Activated CD8-positive, alpha-beta T cell treated with anti-CD3 and anti-CD28 coated beads, Interleukin-2, amount 10 ng/mL, durations not matched to agents 7 days and 5 days (primary cell): ENCODE measurements at regions of chr7 and their contacts with region 1.

Region 1: DNA sequence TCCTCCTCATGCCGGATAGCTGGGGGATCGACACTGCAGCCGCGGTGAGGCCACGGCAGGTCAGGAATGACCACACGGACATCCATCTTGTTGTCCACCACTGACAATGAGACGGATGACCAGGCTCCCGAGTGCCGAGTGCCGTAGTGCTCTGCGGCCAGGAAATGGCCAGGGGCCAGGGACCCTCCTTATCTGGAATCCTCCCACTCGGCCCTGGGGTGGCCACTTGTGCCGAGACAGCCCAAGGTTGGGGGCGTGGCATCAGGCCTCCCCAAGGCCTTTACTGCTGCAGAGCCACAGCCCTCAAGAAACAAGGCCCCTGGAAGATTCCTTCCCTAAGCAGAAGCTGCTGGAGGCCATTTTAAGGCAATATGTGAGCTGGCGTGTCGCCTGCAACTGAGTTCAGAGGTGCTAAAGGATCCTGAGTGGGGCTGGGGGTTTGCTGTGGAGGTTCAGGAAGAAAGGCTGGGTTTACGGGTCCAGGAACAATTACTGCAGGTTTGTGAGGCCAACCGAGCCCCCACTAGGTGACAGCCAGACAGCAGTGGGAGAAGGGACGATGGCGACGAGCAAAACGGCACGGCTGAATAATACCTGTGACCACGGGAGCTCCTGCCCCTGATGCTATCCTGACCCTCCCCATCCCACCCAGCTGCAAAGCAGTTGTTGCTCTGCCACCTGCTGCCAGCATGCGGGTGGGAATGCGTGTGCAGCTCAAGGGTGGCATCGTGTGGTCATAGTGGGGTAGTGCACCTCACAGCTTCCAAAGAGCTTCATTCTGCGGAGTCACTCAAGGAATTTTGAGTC is 31.6 kb upstream of the LEP start:
- DNase-seq: peak; percentile 74
- ATAC-seq: peak; percentile 84
- H3K4me3 Mint-ChIP-seq: no peak overlapping the region
- H3K27ac Mint-ChIP-seq: no peak overlapping the region
- H3K4me1 Mint-ChIP-seq: no peaks in the 10 kb centered on the region
- H3K27me3 Mint-ChIP-seq: peaks cover 14% of the 10 kb centered on the region

Region 2: DNA sequence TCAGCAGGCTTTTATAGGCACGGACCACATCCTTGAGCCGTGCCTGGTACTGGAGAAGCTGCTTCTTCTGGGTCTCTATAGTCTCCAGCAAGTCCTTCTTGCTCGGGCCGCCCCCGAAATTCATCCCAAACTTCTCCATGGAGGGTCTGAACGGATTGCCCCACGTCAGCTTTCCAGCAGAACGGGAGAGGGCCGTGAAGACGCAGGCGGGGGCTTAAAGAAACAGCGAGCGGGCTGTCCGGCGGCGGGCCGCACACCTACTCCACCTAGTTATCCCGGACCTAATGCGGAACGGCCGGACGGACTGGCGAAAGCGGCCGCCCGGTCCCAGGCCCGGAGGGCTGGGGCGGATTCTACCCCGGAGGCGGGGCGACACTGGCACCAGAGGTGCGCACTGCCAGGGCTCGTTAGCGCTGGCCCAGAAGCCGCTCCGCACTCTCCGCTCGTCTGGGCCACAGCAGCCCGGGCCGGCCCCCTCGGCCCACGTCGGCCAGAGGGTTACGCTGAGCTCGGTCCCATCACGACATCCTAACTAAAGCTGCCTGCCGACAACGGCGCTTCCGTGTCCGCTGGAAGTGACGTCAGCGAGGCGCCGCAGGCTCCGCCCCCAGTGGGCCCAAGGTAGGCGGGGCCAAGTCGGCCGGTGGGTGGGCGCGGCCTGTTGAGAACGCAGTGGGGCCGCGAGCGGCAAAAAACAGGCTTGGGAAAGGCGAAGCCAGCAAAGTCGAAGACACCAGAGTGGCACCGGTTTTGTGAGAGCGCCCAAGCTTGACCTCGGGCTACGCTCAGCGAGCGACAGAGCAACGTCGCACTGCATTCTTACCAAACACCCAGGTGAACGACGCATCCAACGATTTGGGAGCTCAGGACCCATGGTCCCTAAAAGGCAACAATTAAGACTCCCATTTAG is 624.1 kb before region 1 on chr7 and contains the start of gene GCC1:
- CTCF ChIA-PET with region 1: interaction called, 11 read pairs
- POLR2A ChIA-PET with region 1: interaction called, 3 read pairs
- DNase-seq: peak; percentile 94
- ATAC-seq: peak; percentile 76
- H3K4me3 Mint-ChIP-seq: peak within 1 kb of the TSS; percentile 94
- H3K27ac Mint-ChIP-seq: peak within 1 kb of the TSS; percentile 97
- H3K4me1 Mint-ChIP-seq: peaks cover 58% of the 10 kb centered on the region
- H3K27me3 Mint-ChIP-seq: no peaks in the 10 kb centered on the region
- total RNA-seq, gene GCC1: 18.0 to 18.6 TPM

Region 3: GRCh38 chr7:127988751-127989150 is 220.7 kb before region 1 on chr7:
- CTCF ChIA-PET with region 1: no interaction called
- POLR2A ChIA-PET with region 1: no interaction called
- DNase-seq: no peak
- ATAC-seq: no peak
- H3K4me3 Mint-ChIP-seq: no peak overlapping the region
- H3K27ac Mint-ChIP-seq: no peak overlapping the region
- H3K4me1 Mint-ChIP-seq: peaks cover 3% of the 10 kb centered on the region
- H3K27me3 Mint-ChIP-seq: no peaks in the 10 kb centered on the region

Region 4: GRCh38 chr7:128108641-128109423 is 100.6 kb before region 1 on chr7:
- CTCF ChIA-PET with region 1: interaction called, 16 read pairs
- POLR2A ChIA-PET with region 1: no interaction called
- DNase-seq: peak; percentile 57
- ATAC-seq: peak; percentile 78
- H3K4me3 Mint-ChIP-seq: peak overlapping the region; percentile 55
- H3K27ac Mint-ChIP-seq: peak overlapping the region; percentile 94
- H3K4me1 Mint-ChIP-seq: peaks cover 80% of the 10 kb centered on the region
- H3K27me3 Mint-ChIP-seq: no peaks in the 10 kb centered on the region

Region 5: DNA sequence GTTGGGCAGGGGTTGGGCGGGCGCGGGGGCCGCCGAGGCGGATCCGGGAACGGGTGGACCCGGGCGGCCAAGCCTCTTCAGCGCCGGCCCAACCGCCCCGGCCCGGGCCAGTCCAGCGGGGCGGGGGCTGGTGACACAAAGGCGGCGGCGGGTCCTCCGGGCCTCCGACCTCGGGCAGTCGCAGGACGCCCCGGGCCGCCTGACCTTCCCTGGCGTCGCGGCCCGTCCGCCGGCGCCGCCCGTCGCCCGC is 321.3 kb after region 1 on chr7:
- CTCF ChIA-PET with region 1: no interaction called
- POLR2A ChIA-PET with region 1: no interaction called
- DNase-seq: no peak
- ATAC-seq: no peak
- H3K4me3 Mint-ChIP-seq: peak overlapping the region; percentile 22
- H3K27ac Mint-ChIP-seq: no peak overlapping the region
- H3K4me1 Mint-ChIP-seq: peaks cover 29% of the 10 kb centered on the region
- H3K27me3 Mint-ChIP-seq: no peaks in the 10 kb centered on the region